ENCODE measurements at regions of chrX and their contacts with region 1.

Region 1: GRCh38 chrX:123833387-123833786 is 26.5 kb upstream of the XIAP start:
- DNase-seq: peak; percentile 27
- H3K4me3 Mint-ChIP-seq: no peak overlapping the region
- H3K27ac Mint-ChIP-seq: no peak overlapping the region
- H3K4me1 Mint-ChIP-seq: no peaks in the 10 kb centered on the region
- H3K27me3 Mint-ChIP-seq: no peaks in the 10 kb centered on the region

Region 2: DNA sequence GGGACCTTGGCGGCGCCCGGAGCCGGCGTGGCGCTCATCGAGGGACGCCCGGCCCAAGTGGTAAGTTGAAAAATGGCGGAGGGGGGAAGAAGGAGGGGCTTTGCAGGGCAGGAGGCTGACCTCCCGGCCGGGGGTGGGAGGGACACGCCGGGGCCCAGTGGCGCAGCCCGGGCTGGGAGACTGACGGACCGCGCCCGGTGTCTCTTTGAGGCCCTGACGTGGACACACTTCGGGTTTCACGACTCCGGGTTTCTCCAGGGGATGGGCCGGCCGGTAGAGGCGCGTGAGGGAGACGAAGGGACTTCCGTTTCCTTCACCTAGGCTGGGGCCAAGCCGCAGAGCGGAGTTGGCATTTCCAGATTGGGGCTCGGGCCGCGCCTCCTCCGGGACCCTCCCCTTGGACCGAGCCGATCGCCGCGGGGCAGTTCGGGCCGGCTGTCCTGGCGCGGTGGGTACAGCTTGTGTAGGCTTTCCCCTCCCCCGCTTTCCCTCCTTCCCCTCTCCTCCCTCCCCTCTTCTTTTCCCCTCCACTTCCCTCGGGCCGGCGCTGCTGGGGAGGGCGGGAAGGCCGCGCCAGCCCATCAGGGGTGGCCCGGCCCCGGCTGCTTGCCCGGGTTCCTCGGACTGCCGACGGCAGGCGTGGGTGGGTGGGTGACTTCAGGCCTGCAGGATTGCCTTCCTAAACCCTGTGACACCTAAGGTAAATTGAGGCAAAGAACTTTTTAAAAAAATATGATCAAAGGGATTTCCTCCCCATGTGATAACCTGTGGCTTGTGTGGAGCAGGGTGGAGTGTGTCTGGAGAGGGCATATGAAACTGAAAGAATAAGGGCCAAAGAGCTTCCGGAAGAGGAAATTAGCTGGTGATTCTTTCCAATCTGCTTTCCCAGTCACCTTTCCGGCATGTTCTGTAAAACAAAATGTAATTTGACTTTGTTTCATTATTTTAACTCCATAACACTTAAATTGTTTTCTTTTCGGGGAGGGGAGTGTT is 26.8 kb after region 1 on chrX and contains the start of gene XIAP:
- intact Hi-C with region 1: loop called (anchors 1 kb)
- DNase-seq: peak; percentile 66
- H3K4me3 Mint-ChIP-seq: peak within 1 kb of the TSS; percentile 89
- H3K27ac Mint-ChIP-seq: peak within 1 kb of the TSS; percentile 90
- H3K4me1 Mint-ChIP-seq: peaks cover 17% of the 10 kb centered on the region
- H3K27me3 Mint-ChIP-seq: no peaks in the 10 kb centered on the region
- total RNA-seq, gene XIAP: 35.0 and 39.1 TPM in 2 replicates

Region 3: DNA sequence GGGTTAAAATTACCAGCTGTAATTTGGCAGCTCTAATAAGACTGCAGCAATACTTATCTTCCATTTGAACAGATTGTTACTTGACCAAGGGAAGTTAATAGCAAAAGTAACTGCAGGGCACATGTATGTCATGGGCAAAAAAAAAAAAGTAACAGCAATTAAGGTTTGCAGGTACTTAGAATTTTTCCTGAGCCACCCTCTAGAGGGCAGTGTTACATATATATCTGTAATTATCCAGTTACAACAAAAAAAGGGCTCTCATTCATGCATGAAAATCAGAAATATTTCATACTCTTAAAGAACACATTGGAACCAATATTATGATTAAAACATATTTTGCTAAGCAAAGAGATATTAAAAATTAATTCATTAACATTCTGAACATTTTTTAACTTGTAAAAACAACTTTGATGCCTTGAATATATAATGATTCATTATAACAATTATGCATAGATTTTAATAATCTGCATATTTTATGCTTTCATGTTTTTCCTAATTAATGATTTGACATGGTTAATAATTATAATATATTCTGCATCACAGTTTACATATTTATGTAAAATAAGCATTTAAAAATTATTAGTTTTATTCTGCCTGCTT is 51.5 kb after region 1 on chrX:
- intact Hi-C with region 1: loop called (anchors 1 kb)
- DNase-seq: no peak
- H3K4me3 Mint-ChIP-seq: no peak overlapping the region
- H3K27ac Mint-ChIP-seq: no peak overlapping the region
- H3K4me1 Mint-ChIP-seq: peaks cover 8% of the 10 kb centered on the region
- H3K27me3 Mint-ChIP-seq: no peaks in the 10 kb centered on the region

Region 4: DNA sequence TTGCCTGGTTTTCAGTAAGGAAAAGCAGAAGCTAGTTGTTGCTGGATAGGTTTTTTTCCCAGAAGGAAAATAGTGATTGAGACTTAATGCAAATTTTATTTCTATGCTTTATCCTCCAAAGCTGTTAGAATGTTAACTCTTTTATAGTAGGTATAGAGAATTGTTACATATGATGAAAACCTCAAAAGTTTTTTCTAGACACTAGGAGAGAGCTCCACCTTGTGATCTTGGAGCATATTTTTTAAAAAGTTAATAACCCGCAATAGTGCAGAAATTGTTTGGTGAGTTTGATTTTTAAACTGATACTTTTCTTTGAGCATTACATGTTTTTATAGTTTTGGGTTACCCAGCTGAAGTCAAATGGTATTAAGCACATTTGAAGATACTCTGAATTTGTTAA is 184.6 kb after region 1 on chrX:
- intact Hi-C with region 1: loop called (anchors 1 kb)
- DNase-seq: no peak
- H3K4me3 Mint-ChIP-seq: no peak overlapping the region
- H3K27ac Mint-ChIP-seq: no peak overlapping the region
- H3K4me1 Mint-ChIP-seq: peaks cover 9% of the 10 kb centered on the region
- H3K27me3 Mint-ChIP-seq: no peaks in the 10 kb centered on the region

Region 5: GRCh38 chrX:124211312-124211942 is 378.0 kb after region 1 on chrX:
- intact Hi-C with region 1: loop called (anchors 10 kb)
- DNase-seq: peak; percentile 3
- H3K4me3 Mint-ChIP-seq: no peak overlapping the region
- H3K27ac Mint-ChIP-seq: no peak overlapping the region
- H3K4me1 Mint-ChIP-seq: peaks cover 44% of the 10 kb centered on the region
- H3K27me3 Mint-ChIP-seq: peaks cover 5% of the 10 kb centered on the region